B cell (primary cell): ENCODE measurements at regions of chr6 and their contacts with region 1.

Region 1: DNA sequence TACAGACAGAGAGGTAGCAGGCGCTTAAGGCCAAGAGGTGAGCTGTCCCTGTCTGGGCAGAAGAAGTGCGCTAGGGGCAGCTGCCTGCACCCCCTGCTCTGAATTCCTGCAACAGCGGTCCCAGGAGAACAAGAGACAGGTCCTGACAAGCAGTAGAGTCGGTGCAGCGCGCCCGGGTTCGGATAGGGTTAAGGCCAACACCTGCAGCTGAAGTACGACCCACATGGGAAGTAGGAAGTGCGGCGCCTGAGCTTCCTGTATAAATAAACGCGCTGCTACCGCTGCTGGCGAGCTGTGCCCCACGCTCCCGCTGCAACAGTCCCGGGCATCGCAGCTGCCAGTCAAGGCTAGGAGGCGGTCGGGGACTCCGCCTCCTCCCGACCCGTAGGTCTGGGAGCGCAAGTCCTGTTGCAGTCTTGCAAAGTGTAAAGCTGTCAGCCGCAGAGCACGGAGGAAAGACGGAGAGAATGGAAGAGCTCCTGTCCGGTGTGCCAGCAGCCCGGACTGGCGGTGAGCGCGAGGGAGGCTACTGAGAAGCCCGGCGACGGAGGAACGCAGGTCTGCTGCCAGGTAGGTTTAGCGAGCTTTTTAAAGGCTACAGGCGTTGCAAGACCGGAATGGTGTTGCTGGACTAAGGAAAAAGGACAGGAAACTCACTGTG is at the start of gene RNF144B:
- DNase-seq: peak; percentile 84
- ATAC-seq: peak; percentile 95
- H3K4me3 ChIP-seq: peak within 1 kb of the TSS; percentile 72 to 100 (median 92)
- H3K4me3 Mint-ChIP-seq: peak within 1 kb of the TSS; percentile 99
- H3K27ac ChIP-seq: peak within 1 kb of the TSS; percentile 60 to 77
- H3K27ac Mint-ChIP-seq: peak within 1 kb of the TSS; percentile 95
- H3K4me1 ChIP-seq: peaks cover 32 to 35% of the 10 kb centered on the region in 2 donors
- H3K4me1 Mint-ChIP-seq: peaks cover 56% of the 10 kb centered on the region
- H3K27me3 ChIP-seq: no peaks in the 10 kb centered on the region
- H3K27me3 Mint-ChIP-seq: no peaks in the 10 kb centered on the region
- CTCF ChIP-seq: no peak
- total RNA-seq, gene RNF144B: 17.0 and 21.4 TPM in 2 replicates

Region 2: GRCh38 chr6:17987576-17988421 is 399.4 kb before region 1 on chr6 and contains the start of gene KIF13A:
- CTCF ChIA-PET with region 1: no interaction called
- POLR2A ChIA-PET with region 1: no interaction called
- intact Hi-C with region 1: no loop called
- DNase-seq: peak; percentile 81
- ATAC-seq: peak; percentile 74
- H3K4me3 ChIP-seq: peak within 1 kb of the TSS; percentile 41 to 85 (median 63)
- H3K4me3 Mint-ChIP-seq: peak within 1 kb of the TSS; percentile 97
- H3K27ac ChIP-seq: peak within 1 kb of the TSS in 1 of 2 donors; percentile 58
- H3K27ac Mint-ChIP-seq: peak within 1 kb of the TSS; percentile 92
- H3K4me1 ChIP-seq: peaks cover 19 to 23% of the 10 kb centered on the region in 2 donors
- H3K4me1 Mint-ChIP-seq: peaks cover 40% of the 10 kb centered on the region
- H3K27me3 ChIP-seq: peaks cover 0 to 13% (median 5%) of the 10 kb centered on the region in 4 experiments
- H3K27me3 Mint-ChIP-seq: no peaks in the 10 kb centered on the region
- CTCF ChIP-seq: peak; percentile 35
- total RNA-seq, gene KIF13A: 21.3 and 23.4 TPM in 2 replicates

Region 3: DNA sequence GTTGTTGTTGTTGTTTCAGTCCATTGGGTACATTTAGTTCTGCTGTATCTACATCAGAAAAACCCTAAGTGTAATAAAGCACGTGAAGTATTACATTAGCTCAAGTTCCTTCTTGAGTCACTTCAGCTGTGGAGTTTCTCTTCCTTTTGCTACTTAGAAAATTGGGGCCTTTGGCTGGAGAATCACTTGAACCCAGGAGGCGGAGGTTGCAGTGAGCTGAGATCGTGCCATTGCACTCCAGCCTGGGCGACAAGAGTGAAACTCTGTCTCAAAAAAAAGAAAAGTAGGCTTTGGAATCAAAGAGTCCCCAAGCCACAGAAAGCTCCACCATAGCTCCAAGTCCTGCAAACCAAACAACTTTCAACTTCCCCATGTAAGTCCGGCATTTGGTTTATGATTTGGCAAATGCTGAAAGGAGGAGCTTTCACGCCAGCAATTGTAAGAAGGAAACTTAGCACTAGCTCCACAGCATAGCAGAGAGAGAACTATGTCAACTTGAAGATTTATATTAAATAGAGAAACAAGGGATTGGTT is 56.6 kb before region 1 on chr6:
- CTCF ChIA-PET with region 1: interaction called, 5 read pairs
- POLR2A ChIA-PET with region 1: interaction called, 4 read pairs
- intact Hi-C with region 1: loop called (anchors 2 kb)
- DNase-seq: peak; percentile 72
- ATAC-seq: peak; percentile 52
- H3K4me3 ChIP-seq: peak overlapping the region in 3 of 5 experiments; percentile 4 to 6 (median 4)
- H3K4me3 Mint-ChIP-seq: peak overlapping the region; percentile 70
- H3K27ac ChIP-seq: peak overlapping the region; percentile 68 to 86
- H3K27ac Mint-ChIP-seq: peak overlapping the region; percentile 85
- H3K4me1 ChIP-seq: peaks cover 31 to 45% of the 10 kb centered on the region in 2 donors
- H3K4me1 Mint-ChIP-seq: peaks cover 50% of the 10 kb centered on the region
- H3K27me3 ChIP-seq: no peaks in the 10 kb centered on the region
- H3K27me3 Mint-ChIP-seq: no peaks in the 10 kb centered on the region
- CTCF ChIP-seq: no peak

Region 4: DNA sequence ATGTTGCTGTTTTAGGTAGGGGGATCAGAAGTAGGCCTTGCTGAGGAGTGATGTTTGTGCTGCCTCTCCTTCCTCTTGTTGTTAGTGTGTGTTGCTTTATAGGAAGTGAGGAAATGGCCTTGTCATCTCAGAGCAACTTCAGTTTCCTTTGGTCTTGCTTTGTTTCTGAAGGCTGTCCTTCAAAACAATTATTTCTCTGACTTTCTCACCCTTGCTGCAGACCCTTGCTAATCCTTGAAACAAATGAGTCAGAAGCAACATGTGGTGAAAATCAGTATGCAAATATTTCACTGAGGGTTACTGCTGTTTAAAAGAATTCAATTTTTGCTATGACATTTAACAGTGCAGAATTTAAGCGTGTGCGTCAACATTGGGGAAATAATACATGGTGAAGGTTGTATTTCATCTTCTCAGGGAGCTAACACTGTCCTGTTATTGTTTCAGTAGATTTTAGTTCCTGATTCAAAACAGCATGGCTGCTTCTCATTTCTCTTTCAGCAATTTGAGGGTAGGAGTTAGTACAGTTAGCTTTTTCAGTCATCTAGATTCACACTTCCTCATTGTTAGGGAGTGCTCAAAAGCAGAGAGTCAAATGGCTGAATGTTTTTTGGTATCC is 13.7 kb after region 1 on chr6:
- CTCF ChIA-PET with region 1: interaction called, 5 read pairs
- POLR2A ChIA-PET with region 1: interaction called, 13 read pairs
- intact Hi-C with region 1: loop called (anchors 1 kb)
- DNase-seq: peak; percentile 73
- ATAC-seq: peak; percentile 90
- H3K4me3 ChIP-seq: peak overlapping the region in 2 of 5 experiments; percentile 7 to 11
- H3K4me3 Mint-ChIP-seq: peak overlapping the region; percentile 70
- H3K27ac ChIP-seq: peak overlapping the region; percentile 54 to 84
- H3K27ac Mint-ChIP-seq: peak overlapping the region; percentile 90
- H3K4me1 ChIP-seq: peaks cover 23 to 39% of the 10 kb centered on the region in 2 donors
- H3K4me1 Mint-ChIP-seq: peaks cover 40% of the 10 kb centered on the region
- H3K27me3 ChIP-seq: no peaks in the 10 kb centered on the region
- H3K27me3 Mint-ChIP-seq: no peaks in the 10 kb centered on the region
- CTCF ChIP-seq: no peak

Region 5: DNA sequence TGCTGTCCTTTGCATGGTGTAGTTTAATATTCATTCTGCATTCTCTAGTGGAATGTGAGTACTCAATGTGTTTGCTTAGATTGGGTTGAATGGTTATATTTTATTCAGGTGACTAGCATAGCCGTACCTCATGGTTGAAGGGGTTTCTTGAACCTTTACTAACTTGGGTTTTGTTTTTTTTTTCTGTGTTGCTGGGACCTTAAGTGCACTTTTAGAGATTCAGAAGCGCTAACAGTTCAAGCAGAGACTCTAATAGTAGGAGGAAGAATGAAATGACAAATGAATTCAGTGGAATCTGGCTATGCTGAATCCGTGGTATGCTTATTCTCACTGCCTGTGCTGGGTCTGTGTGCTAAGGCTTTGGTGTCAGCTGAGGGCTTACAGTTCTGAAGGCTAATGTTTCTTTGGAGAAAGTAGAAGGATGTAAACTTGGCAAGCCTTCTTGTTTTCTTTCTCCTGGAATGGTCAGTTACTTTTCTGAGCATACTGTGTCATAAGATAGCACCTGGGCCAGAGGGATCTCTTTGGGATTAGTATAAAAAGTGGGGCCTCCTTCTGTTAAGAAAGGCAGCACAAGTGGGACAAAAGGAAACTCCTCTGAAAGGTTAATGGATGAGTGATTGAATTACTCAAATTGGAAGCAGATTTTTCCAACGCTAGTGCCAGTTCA is 28.6 kb after region 1 on chr6:
- CTCF ChIA-PET with region 1: no interaction called
- POLR2A ChIA-PET with region 1: no interaction called
- intact Hi-C with region 1: no loop called
- DNase-seq: no peak
- ATAC-seq: no peak
- H3K4me3 ChIP-seq: no peak overlapping the region
- H3K4me3 Mint-ChIP-seq: no peak overlapping the region
- H3K27ac ChIP-seq: no peak overlapping the region
- H3K27ac Mint-ChIP-seq: no peak overlapping the region
- H3K4me1 ChIP-seq: peaks cover 17 to 18% of the 10 kb centered on the region in 2 donors
- H3K4me1 Mint-ChIP-seq: peaks cover 42% of the 10 kb centered on the region
- H3K27me3 ChIP-seq: no peaks in the 10 kb centered on the region
- H3K27me3 Mint-ChIP-seq: no peaks in the 10 kb centered on the region
- CTCF ChIP-seq: no peak

Region 6: DNA sequence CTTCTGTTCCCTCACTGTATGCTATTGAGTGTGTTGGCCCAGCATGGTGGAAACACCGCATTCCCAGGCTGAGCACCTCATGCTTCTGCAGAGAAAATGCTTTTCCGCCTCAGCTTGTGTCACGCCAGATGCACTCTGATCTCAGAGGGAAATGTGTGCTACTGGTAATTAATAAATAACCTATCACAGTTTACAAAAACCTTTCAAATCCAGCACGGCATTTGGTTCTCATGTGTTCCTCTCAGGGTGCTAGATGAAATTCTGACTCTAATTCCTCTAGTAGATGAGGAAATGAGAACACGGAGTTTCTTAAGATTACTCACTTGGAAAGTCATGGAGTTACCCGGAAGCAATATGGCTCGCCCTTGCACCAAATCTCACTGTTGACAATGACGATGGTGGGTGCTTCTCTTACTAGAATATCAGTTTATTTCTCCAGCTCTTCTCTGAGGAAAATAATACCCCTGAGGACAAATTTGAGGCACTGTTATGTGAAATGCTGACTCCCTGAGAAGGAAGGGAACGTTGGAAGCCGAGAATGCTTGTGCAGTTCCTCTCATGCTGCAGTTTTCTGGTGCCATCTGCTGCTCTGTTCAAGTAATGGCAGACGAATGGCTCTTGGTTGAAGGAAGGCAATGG is 116.5 kb after region 1 on chr6:
- CTCF ChIA-PET with region 1: interaction called, 17 read pairs
- POLR2A ChIA-PET with region 1: no interaction called
- intact Hi-C with region 1: no loop called
- DNase-seq: peak; percentile 74
- ATAC-seq: peak; percentile 79
- H3K4me3 ChIP-seq: peak overlapping the region in 3 of 5 experiments; percentile 22 to 41 (median 40)
- H3K4me3 Mint-ChIP-seq: peak overlapping the region; percentile 74
- H3K27ac ChIP-seq: no peak overlapping the region
- H3K27ac Mint-ChIP-seq: no peak overlapping the region
- H3K4me1 ChIP-seq: peaks cover 7 to 17% of the 10 kb centered on the region in 2 donors
- H3K4me1 Mint-ChIP-seq: peaks cover 12% of the 10 kb centered on the region
- H3K27me3 ChIP-seq: no peaks in the 10 kb centered on the region
- H3K27me3 Mint-ChIP-seq: no peaks in the 10 kb centered on the region
- CTCF ChIP-seq: peak; percentile 97